ENCODE measurements at regions of chr1 and their contacts with region 1.

Region 1: GRCh38 chr1:66764994-66765578 is 12.8 kb downstream of the DYNLT5 start:
- DNase-seq: peak in 1 of 2 experiments; percentile 18
- H3K4me3 ChIP-seq: no peak overlapping the region
- H3K4me3 Mint-ChIP-seq: no peak overlapping the region
- H3K27ac Mint-ChIP-seq: no peak overlapping the region
- H3K4me1 ChIP-seq: no peaks in the 10 kb centered on the region
- H3K4me1 Mint-ChIP-seq: no peaks in the 10 kb centered on the region
- H3K27me3 ChIP-seq: no peaks in the 10 kb centered on the region
- H3K27me3 Mint-ChIP-seq: no peaks in the 10 kb centered on the region
- CTCF ChIP-seq: peak; percentile 27 to 49

Region 2: GRCh38 chr1:66452162-66452561 is 312.9 kb before region 1 on chr1:
- CTCF ChIA-PET with region 1: no interaction called
- POLR2A ChIA-PET with region 1: no interaction called
- intact Hi-C with region 1: no loop called
- DNase-seq: no peak
- H3K4me3 ChIP-seq: no peak overlapping the region
- H3K4me3 Mint-ChIP-seq: no peak overlapping the region
- H3K27ac Mint-ChIP-seq: no peak overlapping the region
- H3K4me1 ChIP-seq: no peaks in the 10 kb centered on the region
- H3K4me1 Mint-ChIP-seq: no peaks in the 10 kb centered on the region
- H3K27me3 ChIP-seq: no peaks in the 10 kb centered on the region
- H3K27me3 Mint-ChIP-seq: peaks cover 4% of the 10 kb centered on the region
- CTCF ChIP-seq: no peak

Region 3: DNA sequence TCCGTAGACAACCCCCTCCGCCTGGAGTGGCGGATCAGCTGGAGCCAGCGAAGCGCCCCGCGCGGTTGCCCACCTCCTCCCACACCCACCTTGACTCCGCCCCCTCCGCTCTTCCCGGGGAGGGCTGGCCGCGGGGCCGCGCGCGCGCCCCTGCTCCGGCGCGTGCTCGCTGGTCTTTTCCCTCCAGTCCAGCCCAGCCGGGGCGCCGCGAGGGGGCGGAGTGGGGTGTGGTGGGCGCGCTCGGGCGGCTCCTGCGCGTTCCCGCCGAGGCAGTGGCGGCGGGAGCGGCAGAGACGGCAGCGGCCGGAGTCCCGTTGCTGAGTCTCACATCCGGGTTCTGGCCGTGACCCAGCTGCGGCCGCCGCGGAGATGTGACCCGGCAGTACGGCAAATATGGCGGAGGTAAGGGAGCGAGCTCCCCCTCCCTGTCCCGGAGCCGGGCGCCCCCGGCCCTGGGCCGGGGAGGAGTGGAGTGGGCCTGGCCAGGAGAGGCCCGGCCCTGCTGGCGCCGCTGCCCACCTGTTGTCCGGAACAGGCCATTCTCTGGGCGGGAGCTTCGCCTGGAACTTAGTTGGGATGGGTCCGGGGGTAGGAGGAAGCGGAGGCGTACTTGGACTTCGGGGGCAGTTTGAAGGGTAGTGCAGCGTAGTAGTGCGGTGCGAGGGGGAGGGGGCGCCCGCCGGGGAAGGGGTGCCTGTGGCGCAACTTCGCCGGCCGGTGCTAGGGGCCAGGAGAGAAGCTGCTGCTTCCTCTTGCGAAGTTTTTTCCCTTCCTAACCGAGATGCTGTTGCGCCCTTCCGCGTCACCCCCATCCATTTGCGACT is 165.1 kb after region 1 on chr1:
- CTCF ChIA-PET with region 1: no interaction called
- POLR2A ChIA-PET with region 1: no interaction called
- intact Hi-C with region 1: loop called (anchors 10 kb)
- DNase-seq: peak; percentile 91 to 95
- H3K4me3 ChIP-seq: peak overlapping the region; percentile 77
- H3K4me3 Mint-ChIP-seq: peak overlapping the region; percentile 83
- H3K27ac Mint-ChIP-seq: peak overlapping the region; percentile 83
- H3K4me1 ChIP-seq: peaks cover 7% of the 10 kb centered on the region; the same call in 1 of the 2 replicates
- H3K4me1 Mint-ChIP-seq: peaks cover 11% of the 10 kb centered on the region
- H3K27me3 ChIP-seq: no peaks in the 10 kb centered on the region
- H3K27me3 Mint-ChIP-seq: no peaks in the 10 kb centered on the region
- CTCF ChIP-seq: no peak

Region 4: DNA sequence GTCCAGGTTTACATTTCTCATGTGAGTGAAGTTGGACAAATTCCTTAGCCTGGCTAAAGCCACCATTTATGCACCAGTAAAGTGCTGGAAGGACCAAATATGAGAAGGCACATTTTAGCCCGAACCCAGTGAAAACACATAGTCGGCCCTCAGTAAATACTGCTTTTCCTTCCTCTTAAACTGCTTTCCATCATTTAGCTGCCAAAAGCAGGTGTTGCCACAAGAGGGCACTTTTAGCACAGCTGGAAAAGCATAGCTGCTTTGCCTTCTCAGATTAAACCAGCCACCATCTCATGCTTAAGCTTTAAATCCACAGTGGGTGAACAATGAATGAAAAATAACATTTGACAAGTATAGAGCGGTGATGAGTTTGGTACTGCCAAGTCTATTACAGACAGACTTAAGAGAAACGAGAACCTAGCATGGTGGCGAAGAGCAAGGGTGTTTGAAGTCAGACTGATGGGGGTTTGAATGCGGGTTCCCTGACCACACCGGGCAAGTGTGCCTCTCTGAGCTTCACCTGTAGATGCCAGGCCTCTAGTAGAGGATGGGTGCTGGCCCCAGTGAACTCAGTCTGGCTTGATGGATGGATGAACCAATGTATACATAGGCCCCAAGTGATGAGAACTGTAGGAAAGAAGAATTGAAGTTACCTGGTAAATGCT is 231.1 kb after region 1 on chr1:
- CTCF ChIA-PET with region 1: no interaction called
- POLR2A ChIA-PET with region 1: no interaction called
- intact Hi-C with region 1: loop called (anchors 5 kb)
- DNase-seq: peak; percentile 42
- H3K4me3 ChIP-seq: no peak overlapping the region
- H3K4me3 Mint-ChIP-seq: no peak overlapping the region
- H3K27ac Mint-ChIP-seq: no peak overlapping the region
- H3K4me1 ChIP-seq: no peaks in the 10 kb centered on the region
- H3K4me1 Mint-ChIP-seq: no peaks in the 10 kb centered on the region
- H3K27me3 ChIP-seq: no peaks in the 10 kb centered on the region
- H3K27me3 Mint-ChIP-seq: no peaks in the 10 kb centered on the region
- CTCF ChIP-seq: peak; percentile 43 to 62

Region 5: DNA sequence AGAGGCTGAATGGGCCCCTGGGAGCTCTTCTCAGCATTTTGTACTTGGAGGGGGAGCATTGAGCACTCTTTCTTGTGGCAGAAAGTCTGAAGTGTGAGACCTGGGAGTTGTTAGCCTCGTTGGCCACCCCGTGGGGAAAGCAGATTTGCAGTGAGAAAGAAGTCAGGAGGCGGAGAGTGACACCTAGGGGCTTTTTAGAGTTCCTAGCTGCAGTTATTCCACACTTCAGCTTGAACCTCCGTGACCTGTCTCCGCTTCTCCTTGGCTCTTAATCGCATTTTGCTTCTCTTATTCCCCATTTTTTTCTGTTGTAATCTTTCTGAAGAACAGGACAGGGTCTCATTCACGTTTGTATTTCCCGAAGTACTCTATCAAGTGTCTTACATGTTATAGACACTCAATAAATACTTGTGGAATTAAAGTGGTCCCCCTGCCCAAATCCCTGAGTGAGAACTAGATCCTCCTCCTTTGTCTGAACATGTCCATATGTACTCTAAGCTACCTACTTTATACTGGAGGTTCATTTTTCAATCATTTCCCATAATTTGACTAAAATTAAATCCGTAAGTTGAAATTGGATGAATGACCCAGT is 384.2 kb after region 1 on chr1:
- CTCF ChIA-PET with region 1: interaction called, 4 read pairs
- POLR2A ChIA-PET with region 1: no interaction called
- intact Hi-C with region 1: loop called (anchors 2 kb)
- DNase-seq: peak; percentile 64 to 68
- H3K4me3 ChIP-seq: no peak overlapping the region
- H3K4me3 Mint-ChIP-seq: no peak overlapping the region
- H3K27ac Mint-ChIP-seq: no peak overlapping the region
- H3K4me1 ChIP-seq: peaks cover 7% of the 10 kb centered on the region; the same call in 1 of the 2 replicates
- H3K4me1 Mint-ChIP-seq: no peaks in the 10 kb centered on the region
- H3K27me3 ChIP-seq: no peaks in the 10 kb centered on the region
- H3K27me3 Mint-ChIP-seq: peaks cover 8% of the 10 kb centered on the region
- CTCF ChIP-seq: peak; percentile 55 to 61

Region 6: GRCh38 chr1:67214420-67215174 is 449.5 kb after region 1 on chr1:
- CTCF ChIA-PET with region 1: interaction called, 4 read pairs
- POLR2A ChIA-PET with region 1: no interaction called
- intact Hi-C with region 1: loop called (anchors 5 kb)
- DNase-seq: peak in 1 of 2 experiments; percentile 39
- H3K4me3 ChIP-seq: no peak overlapping the region
- H3K4me3 Mint-ChIP-seq: no peak overlapping the region
- H3K27ac Mint-ChIP-seq: no peak overlapping the region
- H3K4me1 ChIP-seq: no peaks in the 10 kb centered on the region
- H3K4me1 Mint-ChIP-seq: no peaks in the 10 kb centered on the region
- H3K27me3 ChIP-seq: no peaks in the 10 kb centered on the region
- H3K27me3 Mint-ChIP-seq: no peaks in the 10 kb centered on the region
- CTCF ChIP-seq: peak; percentile 40 to 44